Left cardiac atrium (tissue), 4 donors: ENCODE measurements at regions of chr1 and their contacts with region 1.

Region 1: GRCh38 chr1:158124999-158125398 is 55.7 kb upstream of the CD1D start:
- DNase-seq: peak; percentile 85
- ATAC-seq: peak; percentile 96

Region 2: DNA sequence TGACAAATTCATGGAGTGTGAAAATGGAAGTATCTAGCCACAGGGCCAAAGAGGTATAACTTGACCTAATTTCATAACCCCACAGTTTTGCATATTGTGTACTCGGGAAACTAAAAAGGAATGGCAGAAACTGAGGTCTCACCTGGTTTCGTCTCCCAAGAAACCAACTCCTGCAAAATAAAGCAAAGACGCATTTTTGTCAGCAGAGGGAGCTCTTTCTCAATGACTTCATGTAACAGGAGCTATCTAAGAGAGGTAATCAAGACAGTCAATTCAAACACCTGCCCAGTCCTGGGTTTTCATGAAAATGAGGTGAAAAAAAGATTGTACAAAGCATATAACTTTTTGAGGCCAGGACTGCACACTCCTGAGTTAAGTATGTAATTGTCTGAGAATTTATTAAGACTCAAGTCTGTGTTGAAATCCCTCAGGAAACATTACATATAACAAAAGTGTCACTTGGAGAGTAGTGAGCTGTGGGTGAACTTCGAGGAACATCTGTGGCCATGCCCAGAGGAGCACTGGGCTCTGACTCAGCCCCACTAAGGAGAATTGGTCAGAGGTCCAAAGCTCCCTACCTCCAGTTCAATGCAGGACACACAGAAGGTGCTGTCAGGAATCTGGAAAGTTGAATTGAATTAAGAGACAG is 544.7 kb before region 1 on chr1:
- intact Hi-C with region 1: loop called in 1 of 2 experiments (anchors 5 kb)
- DNase-seq: no peak
- ATAC-seq: no peak

Region 3: GRCh38 chr1:157878059-157878458 is 246.9 kb before region 1 on chr1:
- intact Hi-C with region 1: loop called in 1 of 2 experiments (anchors 10 kb)
- DNase-seq: no peak
- ATAC-seq: peak in 1 of 2 donors; percentile 82

Region 4: DNA sequence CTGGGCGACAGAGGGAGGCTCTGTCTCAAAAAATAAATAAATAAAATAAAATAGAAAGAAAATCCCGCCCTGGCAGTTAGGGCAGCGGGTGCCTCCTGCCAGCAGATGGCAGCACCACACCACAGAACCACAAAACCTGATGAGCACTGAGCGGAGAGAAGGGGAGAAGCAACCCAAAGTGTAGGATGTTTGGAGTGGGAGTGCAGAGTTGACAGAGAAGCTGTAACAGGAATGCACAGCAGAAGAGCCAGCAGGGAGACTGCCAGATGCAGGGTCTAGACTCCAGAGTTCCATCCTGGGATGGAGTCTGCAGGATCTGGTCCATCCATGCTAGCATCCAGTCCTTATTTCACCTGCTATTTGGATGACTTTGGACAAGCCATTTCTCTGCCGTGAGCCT is 161.3 kb before region 1 on chr1:
- intact Hi-C with region 1: loop called (anchors 2 to 5 kb)
- DNase-seq: peak; percentile 67
- ATAC-seq: peak; percentile 80 to 88

Region 5: DNA sequence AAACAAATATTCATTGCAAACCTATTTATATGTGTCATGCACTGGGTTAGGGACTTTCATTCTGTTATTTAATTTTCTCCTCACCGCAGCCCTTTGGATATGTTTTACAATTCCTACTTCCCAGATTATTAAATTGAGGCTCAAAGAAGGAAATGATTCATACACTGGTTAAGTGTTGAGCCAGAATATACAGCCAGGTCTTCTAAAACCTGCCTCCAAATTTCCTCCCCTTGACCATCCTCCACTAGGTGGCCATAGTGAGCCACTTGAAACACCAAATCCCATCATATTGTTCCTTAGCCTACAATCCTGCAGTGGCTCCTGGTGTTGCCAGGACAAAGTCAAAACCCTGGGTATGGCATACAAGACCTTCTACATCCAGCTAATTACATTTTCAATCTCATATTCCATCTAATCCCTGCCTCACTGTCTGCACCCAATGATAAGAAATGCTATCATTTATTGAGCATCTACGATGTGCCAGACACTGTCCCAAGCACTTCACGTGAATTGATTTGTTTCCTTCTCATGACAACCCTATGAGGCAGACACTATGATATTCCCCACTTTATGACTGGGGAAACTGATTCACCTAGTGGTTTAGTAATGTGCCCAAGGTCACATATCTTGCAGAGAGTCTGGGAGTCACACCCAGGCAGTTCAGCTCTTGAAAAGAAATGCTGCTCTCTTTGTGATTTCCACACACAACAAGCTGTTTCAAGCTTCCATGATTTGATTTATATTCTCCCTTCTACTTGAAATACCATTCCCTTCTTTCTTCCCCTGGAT is 155.1 kb before region 1 on chr1:
- intact Hi-C with region 1: loop called (anchors 2 to 5 kb)
- DNase-seq: no peak
- ATAC-seq: peak; percentile 72 to 84